Activated T-helper 1 cell treated with anti-CD3 and anti-CD28 coated beads, Interleukin-12 subunit alpha, Interleukin-12 subunit beta, Interleukin-2, Interleukin-4 antibody, amounts not matched to agents 30 ng/mL and 10 ng/mL and 1 ng/mL, durations not matched to agents 14 hours and 24 hours and 36 hours (primary cell): ENCODE measurements at regions of chr12 and their contacts with region 1.

Region 1: DNA sequence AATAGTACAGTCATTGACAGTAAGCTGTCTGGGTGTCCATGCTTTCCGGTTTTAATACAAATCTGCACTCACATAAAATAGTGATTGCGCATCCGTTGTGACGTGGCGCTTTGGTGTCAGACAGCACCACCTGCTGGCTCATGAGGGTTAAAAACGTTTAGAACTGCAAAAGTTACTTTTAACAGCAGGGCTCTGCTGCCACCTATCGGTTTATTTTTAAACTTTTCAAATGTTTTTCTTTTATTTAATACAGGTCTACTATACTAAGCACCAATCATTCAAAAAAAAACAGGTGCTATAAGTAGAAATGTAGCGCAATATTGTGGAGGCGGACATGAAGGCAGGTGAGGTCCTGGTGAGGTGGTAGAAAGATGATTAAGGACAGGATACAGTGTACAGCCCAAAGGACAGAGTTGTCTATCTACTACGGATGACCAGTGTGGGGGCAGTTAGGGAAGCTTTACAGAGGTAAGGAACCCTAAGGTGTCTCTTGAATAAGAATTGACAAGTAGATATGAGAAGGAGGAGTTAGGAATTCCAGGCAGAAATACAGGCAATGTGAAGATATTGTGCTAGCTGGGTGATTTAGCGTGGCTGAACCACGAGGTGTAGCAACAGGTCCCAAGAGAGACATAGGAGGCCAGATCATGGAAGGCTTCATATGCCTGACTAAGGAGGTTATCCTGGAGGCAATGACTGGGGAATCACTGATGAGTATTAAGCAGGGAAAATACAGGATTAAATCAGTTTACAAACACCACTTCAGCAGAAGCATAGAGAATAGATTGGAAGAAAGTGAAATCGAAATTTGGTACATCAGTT is 91.5 kb upstream of the PRB2 start:
- DNase-seq: peak; percentile 68
- H3K4me3 Mint-ChIP-seq: no peak overlapping the region
- H3K27ac Mint-ChIP-seq: no peak overlapping the region
- H3K4me1 Mint-ChIP-seq: peaks cover 11% of the 10 kb centered on the region
- H3K27me3 Mint-ChIP-seq: peaks cover 10% of the 10 kb centered on the region

Region 2: GRCh38 chr12:10771132-10771733 is 715.6 kb before region 1 on chr12:
- intact Hi-C with region 1: loop called (anchors 1 kb)
- DNase-seq: no peak
- H3K4me3 Mint-ChIP-seq: no peak overlapping the region
- H3K27ac Mint-ChIP-seq: no peak overlapping the region
- H3K4me1 Mint-ChIP-seq: no peaks in the 10 kb centered on the region
- H3K27me3 Mint-ChIP-seq: peaks cover 59% of the 10 kb centered on the region

Region 3: DNA sequence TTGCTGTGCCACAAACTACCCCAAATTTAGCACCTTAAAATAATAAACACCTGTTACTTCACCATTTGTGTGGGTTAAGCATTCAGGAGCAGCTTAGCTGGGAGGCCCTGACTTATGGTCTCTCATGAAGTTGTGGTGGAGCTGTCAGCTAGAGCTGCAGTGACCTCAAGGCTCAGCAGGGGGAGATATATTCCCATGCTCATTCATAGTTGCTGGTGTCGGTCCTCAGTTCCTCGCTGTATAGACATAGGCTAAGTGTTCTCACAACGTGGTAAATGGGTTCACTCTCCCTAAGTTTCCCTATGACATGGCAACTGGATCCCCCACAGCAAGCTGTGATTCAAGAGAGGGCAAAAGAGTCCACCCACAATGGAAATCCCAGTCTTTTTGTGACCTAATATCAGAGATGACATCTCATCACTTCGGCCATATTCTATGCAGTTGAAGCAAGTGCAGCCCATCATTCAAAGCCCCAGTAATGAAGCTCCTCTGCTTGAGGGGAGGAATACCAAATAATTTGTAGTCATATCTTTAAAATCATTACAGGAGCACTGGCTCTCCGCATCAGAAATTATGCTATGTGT is 258.4 kb before region 1 on chr12:
- intact Hi-C with region 1: loop called (anchors 1 kb)
- DNase-seq: no peak
- H3K4me3 Mint-ChIP-seq: no peak overlapping the region
- H3K27ac Mint-ChIP-seq: no peak overlapping the region
- H3K4me1 Mint-ChIP-seq: no peaks in the 10 kb centered on the region
- H3K27me3 Mint-ChIP-seq: peaks cover 5% of the 10 kb centered on the region

Region 4: GRCh38 chr12:11524446-11524845 is 37.6 kb after region 1 on chr12:
- intact Hi-C with region 1: no loop called
- DNase-seq: no peak
- H3K4me3 Mint-ChIP-seq: no peak overlapping the region
- H3K27ac Mint-ChIP-seq: no peak overlapping the region
- H3K4me1 Mint-ChIP-seq: no peaks in the 10 kb centered on the region
- H3K27me3 Mint-ChIP-seq: peaks cover 16% of the 10 kb centered on the region